PC-9 (cell line): ENCODE measurements at regions of chr19 and their contacts with region 1.

Region 1: DNA sequence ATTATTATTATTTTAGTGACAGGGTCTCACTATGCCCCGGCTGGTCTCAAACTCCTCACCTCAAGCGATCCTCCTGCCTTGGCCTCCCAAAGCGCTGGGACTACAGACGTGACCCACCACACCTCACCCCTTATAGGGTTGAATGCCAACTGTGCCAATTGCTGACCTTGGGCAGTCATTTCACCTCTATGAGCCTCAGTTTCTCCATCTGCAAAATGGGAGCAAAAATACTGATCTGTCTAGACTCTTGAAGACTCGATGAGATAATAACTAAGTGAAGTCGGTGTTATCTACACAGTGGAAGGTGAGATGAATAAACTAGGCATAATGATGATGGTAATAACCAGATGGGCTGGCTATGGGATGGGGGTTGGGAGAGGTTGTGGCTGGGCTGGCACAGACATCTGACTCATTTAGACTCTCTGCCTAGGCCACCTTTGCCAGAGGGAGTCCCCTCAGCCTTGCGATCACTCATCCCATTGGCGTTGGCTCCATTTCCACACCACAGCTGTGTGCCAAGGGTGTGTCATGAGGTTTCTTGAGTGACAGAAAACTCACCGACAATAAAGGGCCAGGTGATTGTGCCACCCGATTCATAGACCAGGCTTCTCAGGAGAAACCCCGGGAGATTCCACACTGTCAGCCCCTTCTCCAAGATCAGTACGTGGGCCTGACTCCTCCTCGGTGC is at the start of gene CASP14:
- DNase-seq: peak; percentile 23 to 92
- H3K4me3 ChIP-seq: peak within 1 kb of the TSS; percentile 57
- H3K27ac ChIP-seq: peak within 1 kb of the TSS; percentile 15; the same call in 1 of the 2 replicates
- H3K4me1 ChIP-seq: peaks cover 28% of the 10 kb centered on the region
- H3K27me3 ChIP-seq: no peaks in the 10 kb centered on the region
- CTCF ChIP-seq: no peak
- total RNA-seq, gene CASP14: 0.58 and 1.9 TPM in 2 replicates

Region 2: DNA sequence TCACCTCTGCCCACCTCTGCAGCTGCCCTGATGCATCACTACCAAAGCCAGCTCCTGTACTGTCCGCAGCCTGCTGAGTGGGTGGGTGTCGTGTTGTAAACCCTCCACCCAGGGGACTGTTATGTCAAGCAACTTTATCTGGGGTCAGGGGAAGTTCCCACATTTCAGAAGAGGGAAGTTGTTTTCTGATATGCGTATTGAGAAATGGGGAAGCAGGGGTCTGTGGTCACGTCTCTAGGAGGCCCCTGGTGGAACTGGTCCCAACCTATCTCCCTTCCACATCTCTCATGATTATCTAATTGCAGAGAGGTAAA is 435.0 kb before region 1 on chr19:
- CTCF ChIA-PET with region 1: no interaction called
- POLR2A ChIA-PET with region 1: no interaction called
- intact Hi-C with region 1: no loop called
- DNase-seq: no peak
- H3K4me3 ChIP-seq: no peak overlapping the region
- H3K27ac ChIP-seq: no peak overlapping the region
- H3K4me1 ChIP-seq: no peaks in the 10 kb centered on the region
- H3K27me3 ChIP-seq: 0 out of 2 replicates have a peak, but pooled peaks cover 6% of the 10 kb centered on the region
- CTCF ChIP-seq: no peak

Region 3: DNA sequence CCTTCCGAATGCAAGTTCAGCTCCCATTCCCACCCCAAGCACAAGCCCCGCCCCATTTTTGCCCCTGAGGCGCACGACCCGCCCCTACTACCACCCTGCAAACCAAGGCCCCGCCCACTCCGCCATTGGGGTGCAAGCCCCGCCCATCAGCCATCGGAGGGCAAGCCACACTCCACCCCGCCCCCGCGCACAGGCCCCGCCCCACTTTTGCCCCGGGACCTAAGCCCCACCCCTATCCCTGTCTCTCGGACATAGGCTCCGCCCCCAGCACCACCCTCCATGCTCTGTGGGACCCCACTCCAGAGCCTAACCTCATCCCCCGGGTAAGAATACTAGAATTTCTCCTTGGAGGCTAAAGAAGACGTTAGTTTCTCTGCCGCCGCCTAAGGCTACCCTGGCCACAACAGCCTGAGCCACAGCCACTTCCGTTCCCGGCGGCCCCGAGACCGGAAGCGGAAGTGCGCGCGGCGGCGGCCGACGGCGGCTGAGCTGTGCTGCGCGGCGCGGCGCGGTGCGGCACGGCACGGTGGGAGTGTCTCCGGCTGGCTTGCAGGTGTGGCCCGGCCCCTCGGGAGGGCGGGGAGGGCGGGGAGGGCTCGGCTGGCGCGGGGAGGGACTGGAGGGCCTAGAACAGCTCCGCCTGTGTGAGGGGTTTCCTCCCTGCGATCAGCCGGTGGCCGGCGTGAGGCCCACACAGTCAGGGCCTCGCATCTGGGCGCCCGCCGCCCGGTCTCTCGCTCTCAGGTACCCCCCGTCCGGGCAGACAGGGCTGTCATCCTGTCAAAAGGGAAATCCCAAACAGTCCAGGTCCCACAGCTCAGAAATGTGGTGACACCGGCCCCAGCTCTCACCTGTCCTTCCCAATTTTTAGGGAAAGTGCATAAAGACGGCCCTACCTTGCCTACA is 359.2 kb before region 1 on chr19 and contains the start of gene ZNF333:
- CTCF ChIA-PET with region 1: no interaction called
- POLR2A ChIA-PET with region 1: no interaction called
- intact Hi-C with region 1: no loop called
- DNase-seq: peak; percentile 78 to 92
- H3K4me3 ChIP-seq: peak within 1 kb of the TSS; percentile 69
- H3K27ac ChIP-seq: peak within 1 kb of the TSS; percentile 88
- H3K4me1 ChIP-seq: peaks cover 16% of the 10 kb centered on the region
- H3K27me3 ChIP-seq: no peaks in the 10 kb centered on the region
- CTCF ChIP-seq: no peak
- total RNA-seq, gene ZNF333: 10.1 and 10.5 TPM in 2 replicates

Region 4: DNA sequence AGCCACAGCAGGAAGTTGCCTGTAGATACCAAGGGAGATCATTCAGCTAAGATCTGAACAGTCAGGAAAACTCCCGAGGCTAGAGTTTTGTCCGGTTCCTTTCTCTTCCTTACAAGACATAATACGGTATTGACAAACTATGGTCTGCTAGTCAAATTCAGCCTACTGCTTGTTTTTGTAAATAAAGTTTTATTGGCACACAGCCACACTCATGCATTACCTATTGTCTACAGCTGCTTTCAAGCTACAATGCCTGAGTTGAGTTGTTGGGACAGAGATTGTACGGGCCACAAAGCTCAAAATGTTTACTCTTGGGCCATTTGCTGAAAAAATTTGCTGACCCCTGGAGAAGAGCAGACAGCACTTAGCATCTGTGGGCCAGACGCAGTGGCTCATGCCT is 71.9 kb before region 1 on chr19:
- CTCF ChIA-PET with region 1: no interaction called
- POLR2A ChIA-PET with region 1: interaction called, 28 read pairs
- intact Hi-C with region 1: no loop called
- DNase-seq: no peak
- H3K4me3 ChIP-seq: peak overlapping the region; percentile 13; the same call in 1 of the 2 replicates
- H3K27ac ChIP-seq: no peak overlapping the region
- H3K4me1 ChIP-seq: no peaks in the 10 kb centered on the region
- H3K27me3 ChIP-seq: no peaks in the 10 kb centered on the region
- CTCF ChIP-seq: no peak